ENCODE measurements at regions of chr13 and their contacts with region 1.

Region 1: DNA sequence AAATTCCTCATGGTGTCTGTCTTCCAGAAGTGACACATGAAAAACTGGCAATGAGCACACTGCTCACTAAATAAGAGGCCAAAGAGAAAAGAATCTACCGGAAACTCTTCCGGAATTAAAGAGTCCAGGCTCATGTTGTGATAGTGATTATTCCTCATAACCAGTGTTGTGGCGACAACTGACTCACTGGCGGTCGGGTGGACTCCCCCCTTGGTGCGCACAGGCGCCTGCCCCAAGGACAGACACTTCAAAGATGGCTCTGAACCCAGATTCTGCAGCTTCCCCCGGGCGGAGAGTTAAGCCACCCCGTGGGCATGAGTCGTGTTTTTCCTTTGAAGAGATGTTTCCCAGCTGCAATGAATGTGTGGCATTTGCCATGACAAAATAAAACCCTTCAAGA is 10.3 kb downstream of the IL17D start:
- DNase-seq: no peak
- ATAC-seq: peak; percentile 5; the same call in 1 of the 3 replicates
- H3K4me3 ChIP-seq: peak overlapping the region in 2 of 3 experiments; percentile 22 to 61; a peak in 3 of 6 replicates
- H3K27ac ChIP-seq: no peak overlapping the region
- H3K4me1 ChIP-seq: peaks cover 57% of the 10 kb centered on the region
- H3K27me3 ChIP-seq: no peaks in the 10 kb centered on the region; a peak in 1 of 5 replicates
- CTCF ChIP-seq: no peak
- EP300 ChIP-seq: no peak
- POLR2A ChIP-seq: no peak
- RAD21 ChIP-seq: no peak

Region 2: GRCh38 chr13:20580257-20580656 is 133.5 kb before region 1 on chr13:
- CTCF ChIA-PET with region 1: no interaction called
- POLR2A ChIA-PET with region 1: no interaction called
- in situ Hi-C with region 1: no loop called
- intact Hi-C with region 1: no loop called
- DNase-seq: no peak
- ATAC-seq: no peak
- H3K4me3 ChIP-seq: no peak overlapping the region
- H3K27ac ChIP-seq: no peak overlapping the region
- H3K4me1 ChIP-seq: no peaks in the 10 kb centered on the region
- H3K27me3 ChIP-seq: no peaks in the 10 kb centered on the region
- CTCF ChIP-seq: no peak
- EP300 ChIP-seq: no peak
- POLR2A ChIP-seq: no peak
- RAD21 ChIP-seq: no peak

Region 3: DNA sequence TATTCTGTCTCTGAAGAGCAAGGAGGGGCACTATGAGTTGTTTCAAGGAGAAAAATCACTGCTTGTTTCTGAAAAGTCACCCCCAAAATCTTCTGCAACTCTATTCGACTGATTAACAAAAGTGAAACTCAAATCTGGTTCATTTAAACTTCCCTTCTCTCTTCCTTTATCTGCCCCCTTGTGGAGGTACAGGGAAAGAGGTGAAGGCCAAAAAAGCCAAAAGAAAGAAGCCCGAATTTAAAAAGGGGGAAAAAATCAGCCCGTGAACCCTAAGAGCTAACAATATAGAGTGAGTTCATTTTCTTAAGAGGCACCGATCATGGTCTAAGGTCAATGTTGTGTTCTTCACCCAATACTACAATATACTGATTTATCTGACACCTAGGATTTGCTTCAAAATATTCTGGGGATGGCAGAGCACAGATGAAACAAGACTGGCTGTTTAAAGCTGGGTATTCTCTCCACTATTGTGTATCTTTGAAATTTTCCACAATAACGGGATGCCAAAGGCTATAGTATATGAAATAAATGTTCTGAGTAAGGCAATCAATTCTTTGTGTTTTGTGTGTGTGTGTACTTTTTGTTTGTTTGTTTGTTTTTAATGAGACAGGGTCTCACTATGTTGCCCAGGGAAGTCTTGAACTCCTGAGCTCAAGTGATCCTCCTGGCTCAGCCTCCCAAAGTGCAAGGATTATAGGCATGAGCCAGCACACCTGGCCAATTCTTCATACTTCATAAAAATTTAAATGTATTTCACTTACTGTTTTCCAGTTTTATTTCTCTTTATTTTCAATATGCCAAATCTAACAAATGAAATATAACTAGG is 115.0 kb after region 1 on chr13:
- CTCF ChIA-PET with region 1: interaction called, 7 read pairs
- POLR2A ChIA-PET with region 1: no interaction called
- in situ Hi-C with region 1: no loop called
- intact Hi-C with region 1: loop called (anchors 2 kb)
- DNase-seq: peak; percentile 38
- ATAC-seq: peak; percentile 50
- H3K4me3 ChIP-seq: 0 out of 6 replicates have a peak overlapping the region, but pooled peaks of 1 of the 3 experiments have one; percentile 27
- H3K27ac ChIP-seq: no peak overlapping the region
- H3K4me1 ChIP-seq: peaks cover 8% of the 10 kb centered on the region; the same call in 1 of the 2 replicates
- H3K27me3 ChIP-seq: no peaks in the 10 kb centered on the region; a peak in 1 of 5 replicates
- CTCF ChIP-seq: peak; percentile 68
- EP300 ChIP-seq: no peak
- POLR2A ChIP-seq: no peak
- RAD21 ChIP-seq: 0 out of 2 replicates have a peak, but pooled peaks have one; percentile 25

Measured in HepG2 (cell line).